ENCODE measurements at regions of chrX and their contacts with region 1.

Region 1: DNA sequence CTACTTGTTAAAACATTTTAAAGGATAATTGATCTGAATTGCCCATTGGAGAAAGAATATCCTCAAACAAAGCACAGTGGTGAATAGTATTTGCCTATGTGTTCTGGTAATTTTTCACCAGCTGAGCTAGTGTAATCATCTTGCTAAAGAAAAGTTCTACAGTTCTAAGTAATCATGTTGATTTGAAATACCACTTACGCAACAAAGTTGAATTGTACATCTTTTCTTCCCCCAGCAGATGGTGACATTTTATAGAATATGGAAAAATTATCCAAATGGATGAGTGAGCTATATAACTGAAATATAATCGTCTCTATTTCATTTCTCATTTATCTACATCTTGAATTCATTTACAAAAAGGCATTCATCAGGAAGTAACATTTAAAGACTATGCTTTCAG is 9.7 kb upstream of the ZNF674 start:
- H3K4me3 Mint-ChIP-seq: no peak overlapping the region
- H3K27ac Mint-ChIP-seq: no peak overlapping the region
- H3K4me1 Mint-ChIP-seq: no peaks in the 10 kb centered on the region
- H3K27me3 Mint-ChIP-seq: no peaks in the 10 kb centered on the region

Region 2: GRCh38 chrX:46386510-46386909 is 168.4 kb before region 1 on chrX:
- intact Hi-C with region 1: no loop called
- H3K4me3 Mint-ChIP-seq: no peak overlapping the region
- H3K27ac Mint-ChIP-seq: no peak overlapping the region
- H3K4me1 Mint-ChIP-seq: peaks cover under 1% of the 10 kb centered on the region
- H3K27me3 Mint-ChIP-seq: no peaks in the 10 kb centered on the region

Region 3: GRCh38 chrX:46686003-46686645 is 131.2 kb after region 1 on chrX:
- intact Hi-C with region 1: loop called (anchors 1 kb)
- H3K4me3 Mint-ChIP-seq: no peak overlapping the region
- H3K27ac Mint-ChIP-seq: no peak overlapping the region
- H3K4me1 Mint-ChIP-seq: peaks cover 7% of the 10 kb centered on the region
- H3K27me3 Mint-ChIP-seq: no peaks in the 10 kb centered on the region

Region 4: GRCh38 chrX:46758906-46759644 is 204.1 kb after region 1 on chrX and contains the start of gene SLC9A7:
- intact Hi-C with region 1: loop called (anchors 5 kb)
- H3K4me3 Mint-ChIP-seq: peak within 1 kb of the TSS; percentile 76
- H3K27ac Mint-ChIP-seq: peak within 1 kb of the TSS; percentile 55
- H3K4me1 Mint-ChIP-seq: peaks cover 26% of the 10 kb centered on the region
- H3K27me3 Mint-ChIP-seq: peaks cover 5% of the 10 kb centered on the region

Region 5: DNA sequence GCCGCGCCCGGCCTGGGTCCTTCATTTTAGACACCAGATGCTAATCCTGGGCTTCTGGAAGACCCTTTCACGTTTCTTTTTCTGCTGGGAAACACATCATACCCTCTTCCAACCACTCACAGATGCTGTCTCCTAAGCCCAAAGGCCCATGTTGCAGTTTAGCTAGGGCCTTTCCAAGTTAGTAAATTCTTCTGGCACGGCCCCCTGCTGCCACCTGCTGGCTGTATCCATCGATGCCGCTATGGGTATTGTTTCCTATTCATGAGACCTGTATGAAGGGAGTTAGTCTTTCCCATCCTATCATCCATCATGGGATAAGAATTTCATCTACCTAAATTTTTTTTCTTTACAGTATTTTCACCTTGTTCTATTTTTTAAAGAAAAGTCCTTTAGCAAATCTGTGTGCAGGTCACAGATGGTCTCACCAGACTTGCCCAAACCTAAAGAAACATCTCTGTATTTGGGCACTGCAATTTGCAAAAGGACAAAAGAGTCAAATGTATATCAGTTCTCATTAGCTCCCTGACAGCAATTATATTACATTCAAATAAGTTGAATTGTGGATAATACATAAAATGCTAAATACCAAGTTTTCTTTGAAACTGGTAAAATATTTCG is 241.7 kb after region 1 on chrX:
- intact Hi-C with region 1: loop called (anchors 2 kb)
- H3K4me3 Mint-ChIP-seq: no peak overlapping the region
- H3K27ac Mint-ChIP-seq: no peak overlapping the region
- H3K4me1 Mint-ChIP-seq: peaks cover 11% of the 10 kb centered on the region
- H3K27me3 Mint-ChIP-seq: no peaks in the 10 kb centered on the region

Measured in dendritic cell treated with granulocyte-macrophage colony-stimulating factor and Interleukin-4, amounts not matched to agents 40 ng/mL and 50 ng/mL, for 4 days (primary cell).